Panc1 (cell line): ENCODE measurements at regions of chr2 and their contacts with region 1.

Region 1: DNA sequence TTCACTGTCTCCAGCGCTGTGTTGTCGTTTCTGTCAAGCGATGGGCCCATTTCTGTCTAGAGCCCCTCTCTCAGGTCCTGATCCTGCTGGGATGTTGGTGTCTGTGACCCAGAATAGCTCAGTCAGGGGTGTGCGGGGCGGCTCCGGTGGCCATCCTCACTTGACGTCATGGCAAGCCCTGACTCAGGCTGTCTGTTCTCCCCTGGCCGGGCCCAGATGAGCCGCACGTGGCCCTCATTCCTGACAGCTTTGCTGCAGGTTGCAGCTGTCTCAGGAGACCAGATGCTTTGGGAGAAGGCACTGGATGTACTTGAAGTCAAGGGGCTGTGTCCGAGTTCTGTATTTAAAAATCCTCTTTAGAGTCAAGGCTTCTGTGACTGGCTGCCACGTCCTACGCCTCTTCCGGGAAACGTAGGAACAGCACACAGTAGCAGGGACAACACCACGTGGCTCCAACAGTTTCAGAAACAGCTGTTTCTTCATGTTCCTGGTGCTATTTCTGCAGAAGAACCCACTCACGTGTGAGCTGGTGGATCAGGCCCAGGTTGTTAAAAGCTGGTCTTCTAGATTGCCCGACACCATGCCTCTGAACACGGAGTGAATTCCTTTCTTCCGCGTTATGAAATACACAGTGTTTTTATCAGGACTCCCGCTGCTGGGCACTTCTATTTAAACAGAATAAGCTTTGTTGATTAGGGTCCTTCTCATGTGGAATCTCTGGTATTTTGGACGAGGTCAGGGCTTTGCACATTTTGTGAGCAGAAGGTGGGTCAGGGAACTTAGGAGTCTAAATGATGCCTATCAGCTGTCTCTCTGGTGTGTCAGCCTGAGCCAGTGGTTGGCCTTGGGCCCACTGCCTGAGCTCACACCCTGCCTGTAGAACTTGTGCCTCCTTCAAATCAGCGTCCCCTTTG is 28.3 kb upstream of the NTSR2 start:
- DNase-seq: no peak
- ATAC-seq: peak; percentile 28
- H3K4me3 ChIP-seq: no peak overlapping the region
- H3K27ac ChIP-seq: peak overlapping the region; percentile 82
- H3K4me1 ChIP-seq: peaks cover 25% of the 10 kb centered on the region
- H3K27me3 ChIP-seq: no peaks in the 10 kb centered on the region
- CTCF ChIP-seq: no peak

Region 2: GRCh38 chr2:11738589-11739436 is 40.5 kb after region 1 on chr2:
- CTCF ChIA-PET with region 1: interaction called, 13 read pairs
- POLR2A ChIA-PET with region 1: no interaction called
- in situ Hi-C with region 1: no loop called
- intact Hi-C with region 1: loop called (anchors 2 kb)
- DNase-seq: no peak
- ATAC-seq: peak; percentile 88
- H3K4me3 ChIP-seq: no peak overlapping the region
- H3K27ac ChIP-seq: peak overlapping the region; percentile 57; the same call in 1 of the 2 replicates
- H3K4me1 ChIP-seq: peaks cover 27% of the 10 kb centered on the region
- H3K27me3 ChIP-seq: no peaks in the 10 kb centered on the region
- CTCF ChIP-seq: peak; percentile 66